GM12878 (cell line): ENCODE measurements at regions of chr12 and their contacts with region 1.

Region 1: DNA sequence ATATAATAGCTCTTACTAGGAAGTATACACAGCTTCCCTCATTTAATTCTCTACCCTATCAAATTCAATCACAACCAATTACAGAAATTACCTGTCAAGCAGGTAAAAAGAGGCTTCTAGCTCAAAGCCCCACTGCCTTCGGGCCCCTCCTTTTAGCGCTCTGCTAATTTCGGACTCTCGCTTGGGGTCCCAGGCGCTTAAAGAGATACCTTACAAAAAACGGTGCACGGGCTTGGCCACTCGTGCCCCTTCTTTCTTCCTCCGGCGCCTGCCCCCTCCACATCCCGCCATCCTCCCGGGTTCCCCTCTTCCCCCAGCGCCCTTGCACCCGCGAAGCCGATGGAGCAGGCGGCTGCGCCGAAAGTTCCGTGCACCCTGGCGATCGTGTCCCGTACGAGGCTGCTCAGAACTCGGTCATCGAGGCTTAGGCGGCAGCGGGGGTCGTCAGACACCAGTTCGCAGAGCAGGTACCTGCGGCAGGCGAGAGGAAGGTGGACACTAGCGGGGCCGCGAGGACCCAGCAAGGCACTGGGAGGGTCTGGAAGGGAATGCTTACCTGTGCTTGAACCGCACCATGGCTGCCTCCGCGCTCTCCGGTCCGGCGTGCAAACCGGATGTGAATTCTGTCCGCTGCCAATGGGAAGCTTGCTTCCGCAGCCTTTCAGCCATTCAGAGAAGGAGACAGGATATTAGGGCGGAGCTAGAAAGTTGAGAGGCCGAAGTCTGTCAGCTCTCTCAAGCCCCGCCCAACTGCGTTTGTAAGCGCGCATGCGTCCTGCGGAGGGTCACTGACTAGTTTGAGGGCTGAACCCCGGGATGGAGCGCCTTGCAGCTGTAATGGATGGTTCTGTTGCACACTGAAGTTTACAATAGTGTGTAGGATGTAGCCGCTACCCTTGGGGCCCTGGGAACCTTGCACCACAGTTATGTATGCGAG is at the start of gene POP5:
- DNase-seq: peak; percentile 93
- ATAC-seq: peak; percentile 95
- H3K4me3 ChIP-seq: peak within 1 kb of the TSS; percentile 91
- H3K27ac ChIP-seq: peak within 1 kb of the TSS; percentile 44
- H3K4me1 ChIP-seq: peaks cover 11% of the 10 kb centered on the region
- H3K27me3 ChIP-seq: no peaks in the 10 kb centered on the region; a peak in 1 of 4 replicates
- CTCF ChIP-seq: no peak
- EP300 ChIP-seq: no peak
- POLR2A ChIP-seq: peak; percentile 97
- RAD21 ChIP-seq: no peak
- polyA plus RNA-seq, gene POP5: 217 to 234 TPM

Region 2: GRCh38 chr12:120495723-120496412 is 85.2 kb before region 1 on chr12 and contains the start of gene DYNLL1:
- CTCF ChIA-PET with region 1: interaction called, 3 read pairs
- POLR2A ChIA-PET with region 1: interaction called, 3 read pairs
- RAD21 ChIA-PET with region 1: interaction called, 16 read pairs
- SMC1A ChIA-PET with region 1: interaction called, 3 read pairs
- in situ Hi-C with region 1: no loop called
- intact Hi-C with region 1: no loop called
- DNase-seq: peak; percentile 93
- ATAC-seq: peak; percentile 97
- H3K4me3 ChIP-seq: peak within 1 kb of the TSS; percentile 99
- H3K27ac ChIP-seq: peak within 1 kb of the TSS; percentile 77
- H3K4me1 ChIP-seq: peaks cover 4% of the 10 kb centered on the region
- H3K27me3 ChIP-seq: no peaks in the 10 kb centered on the region
- CTCF ChIP-seq: no peak
- EP300 ChIP-seq: peak in 1 of 2 experiments; percentile 13; a peak in 1 of 4 replicates
- POLR2A ChIP-seq: peak; percentile 97
- RAD21 ChIP-seq: no peak
- polyA plus RNA-seq, gene DYNLL1: 744 to 796 TPM

Region 3: GRCh38 chr12:120625557-120626419 is 44.7 kb after region 1 on chr12:
- CTCF ChIA-PET with region 1: interaction called, 17 read pairs
- POLR2A ChIA-PET with region 1: no interaction called
- RAD21 ChIA-PET with region 1: no interaction called
- SMC1A ChIA-PET with region 1: interaction called, 6 read pairs
- in situ Hi-C with region 1: no loop called
- intact Hi-C with region 1: no loop called
- DNase-seq: peak; percentile 11
- ATAC-seq: peak; percentile 90
- H3K4me3 ChIP-seq: no peak overlapping the region; the same call in 1 of the 2 replicates
- H3K27ac ChIP-seq: no peak overlapping the region
- H3K4me1 ChIP-seq: no peaks in the 10 kb centered on the region
- H3K27me3 ChIP-seq: no peaks in the 10 kb centered on the region; a peak in 2 of 4 replicates
- CTCF ChIP-seq: peak in 2 of 3 experiments; percentile 30 to 40; a peak in 3 of 6 replicates
- EP300 ChIP-seq: no peak
- POLR2A ChIP-seq: no peak
- RAD21 ChIP-seq: 0 out of 2 replicates have a peak, but pooled peaks have one; percentile 5

Region 4: GRCh38 chr12:120710031-120710804 is 129.2 kb after region 1 on chr12 and contains the start of gene UNC119B:
- CTCF ChIA-PET with region 1: interaction called, 29 read pairs
- POLR2A ChIA-PET with region 1: interaction called, 3 read pairs
- RAD21 ChIA-PET with region 1: interaction called, 4 read pairs
- SMC1A ChIA-PET with region 1: interaction called, 11 read pairs
- in situ Hi-C with region 1: loop called (anchors 5 kb)
- intact Hi-C with region 1: loop called (anchors 1 kb)
- DNase-seq: no peak
- ATAC-seq: peak; percentile 88
- H3K4me3 ChIP-seq: peak within 1 kb of the TSS; percentile 68
- H3K27ac ChIP-seq: peak within 1 kb of the TSS; percentile 62
- H3K4me1 ChIP-seq: peaks cover 15% of the 10 kb centered on the region
- H3K27me3 ChIP-seq: no peaks in the 10 kb centered on the region
- CTCF ChIP-seq: no peak
- EP300 ChIP-seq: no peak
- POLR2A ChIP-seq: peak; percentile 79
- RAD21 ChIP-seq: no peak
- polyA plus RNA-seq, gene UNC119B: 4.3 to 8.5 TPM

Region 5: GRCh38 chr12:120904197-120904773 is 323.2 kb after region 1 on chr12 and contains the start of gene SPPL3:
- CTCF ChIA-PET with region 1: no interaction called
- POLR2A ChIA-PET with region 1: no interaction called
- RAD21 ChIA-PET with region 1: interaction called, 5 read pairs
- SMC1A ChIA-PET with region 1: no interaction called
- in situ Hi-C with region 1: no loop called
- intact Hi-C with region 1: loop called (anchors 5 kb)
- DNase-seq: peak; percentile 43
- ATAC-seq: peak; percentile 81
- H3K4me3 ChIP-seq: peak within 1 kb of the TSS; percentile 91
- H3K27ac ChIP-seq: peak within 1 kb of the TSS; percentile 79
- H3K4me1 ChIP-seq: 0 out of 2 replicates have a peak, but pooled peaks cover 3% of the 10 kb centered on the region
- H3K27me3 ChIP-seq: no peaks in the 10 kb centered on the region
- CTCF ChIP-seq: peak in 1 of 3 experiments; percentile 33; a peak in 2 of 6 replicates
- EP300 ChIP-seq: no peak
- POLR2A ChIP-seq: peak; percentile 71
- RAD21 ChIP-seq: no peak
- polyA plus RNA-seq, gene SPPL3: 5.7 to 8.3 TPM

Region 6: DNA sequence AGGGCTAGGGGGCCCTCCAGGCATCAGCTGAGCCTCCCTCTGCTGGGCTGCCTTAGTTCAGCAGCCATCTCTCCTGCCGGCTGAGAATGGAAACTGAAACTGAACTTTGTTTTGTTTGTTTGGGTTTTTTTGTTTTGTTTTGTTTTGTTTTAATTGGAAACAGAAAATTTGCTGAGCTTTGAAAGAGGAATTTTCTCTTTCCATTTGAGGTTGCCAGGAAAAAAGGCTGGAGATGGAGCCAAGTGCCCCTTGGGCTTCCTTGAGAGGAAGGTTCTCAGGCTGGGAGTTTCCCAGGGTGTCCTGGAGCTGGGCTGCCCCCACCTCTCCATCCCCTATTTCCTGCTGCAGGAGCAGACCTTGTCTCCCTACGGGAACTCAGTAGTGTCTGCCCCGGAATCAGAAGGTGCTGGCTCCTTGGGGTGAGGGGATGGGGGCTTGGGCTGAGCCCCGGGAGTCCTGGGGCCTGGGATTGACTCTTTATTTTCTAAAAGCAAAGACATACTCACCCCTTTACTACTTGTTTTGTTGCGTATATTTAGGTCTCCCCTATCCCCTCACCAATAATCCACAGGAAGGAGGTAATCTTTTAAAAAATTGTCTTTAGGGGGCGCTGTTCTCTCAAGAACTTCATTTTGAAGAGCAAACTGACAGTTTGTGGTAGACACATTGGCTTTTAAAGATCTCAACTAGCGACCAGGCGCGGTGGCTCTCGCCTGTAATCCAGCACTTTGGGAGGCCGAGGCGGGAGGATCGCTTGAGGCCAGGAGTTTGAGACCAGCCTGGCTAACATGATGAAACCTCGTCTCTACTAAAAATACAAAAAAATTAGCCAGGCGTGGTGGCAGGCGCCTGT is 479.3 kb after region 1 on chr12:
- CTCF ChIA-PET with region 1: interaction called, 41 read pairs
- POLR2A ChIA-PET with region 1: interaction called, 4 read pairs
- RAD21 ChIA-PET with region 1: interaction called, 10 read pairs
- SMC1A ChIA-PET with region 1: interaction called, 5 read pairs
- in situ Hi-C with region 1: no loop called
- intact Hi-C with region 1: no loop called
- DNase-seq: peak; percentile 56
- ATAC-seq: peak; percentile 96
- H3K4me3 ChIP-seq: peak overlapping the region; percentile 43
- H3K27ac ChIP-seq: peak overlapping the region; percentile 96
- H3K4me1 ChIP-seq: peaks cover 10% of the 10 kb centered on the region
- H3K27me3 ChIP-seq: no peaks in the 10 kb centered on the region
- CTCF ChIP-seq: peak; percentile 50 to 66 (median 56); a peak in 5 of 6 replicates
- EP300 ChIP-seq: no peak
- POLR2A ChIP-seq: peak; percentile 63
- RAD21 ChIP-seq: peak; percentile 69